Body of pancreas (tissue), 4 donors: ENCODE measurements at regions of chr12 and their contacts with region 1.

Region 1: DNA sequence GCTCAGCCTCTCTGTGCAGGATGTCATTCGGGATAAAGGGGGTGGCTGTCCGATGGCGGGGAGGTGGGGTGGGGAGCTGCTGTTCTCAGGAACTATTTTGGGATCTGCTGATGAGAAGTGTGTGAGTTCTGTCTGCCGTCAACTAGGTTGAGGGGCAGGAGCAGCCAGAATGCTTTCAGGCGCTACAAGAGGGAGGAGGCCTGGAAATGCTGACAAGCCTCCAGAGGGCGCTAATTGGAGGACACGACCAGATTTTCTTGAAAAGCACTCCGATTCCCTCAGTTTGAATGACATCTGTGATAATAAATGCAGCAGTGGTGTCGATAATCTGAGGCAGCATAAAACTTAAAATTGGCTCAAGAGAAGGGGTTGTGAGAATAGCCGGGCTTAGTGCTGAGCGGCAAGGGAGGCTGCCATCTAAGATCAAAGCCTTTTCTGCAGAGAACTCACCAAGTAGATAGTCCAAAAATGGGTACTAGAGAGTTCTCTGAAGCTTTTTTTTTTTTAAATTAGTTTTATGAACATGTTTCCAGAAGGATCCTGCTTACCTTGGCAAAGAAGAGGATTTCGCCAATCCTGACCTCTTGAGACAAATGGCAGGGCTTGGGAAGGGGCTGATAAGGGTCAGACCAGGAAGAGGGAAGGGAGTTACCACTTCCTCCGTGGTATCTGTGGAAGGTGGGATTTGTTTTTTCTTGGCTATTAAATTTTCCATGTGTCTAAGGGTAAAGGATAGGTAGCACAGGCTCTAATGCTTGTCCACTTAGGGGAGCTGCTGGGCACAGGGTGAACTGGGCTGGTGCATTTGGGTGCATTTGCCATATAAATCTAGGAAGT is 94.4 kb downstream of the CRACR2A start:
- DNase-seq: peak in 3 of 4 donors; percentile 27 to 57 (median 48)
- ATAC-seq: no peak
- H3K4me3 ChIP-seq: no peak overlapping the region
- H3K27ac ChIP-seq: no peak overlapping the region
- H3K4me1 ChIP-seq: peaks cover 3% of the 10 kb centered on the region
- H3K27me3 ChIP-seq: no peaks in the 10 kb centered on the region
- CTCF ChIP-seq: peak in 5 of 7 experiments; percentile 28 to 54 (median 42)
- POLR2A ChIP-seq: no peak

Region 2: DNA sequence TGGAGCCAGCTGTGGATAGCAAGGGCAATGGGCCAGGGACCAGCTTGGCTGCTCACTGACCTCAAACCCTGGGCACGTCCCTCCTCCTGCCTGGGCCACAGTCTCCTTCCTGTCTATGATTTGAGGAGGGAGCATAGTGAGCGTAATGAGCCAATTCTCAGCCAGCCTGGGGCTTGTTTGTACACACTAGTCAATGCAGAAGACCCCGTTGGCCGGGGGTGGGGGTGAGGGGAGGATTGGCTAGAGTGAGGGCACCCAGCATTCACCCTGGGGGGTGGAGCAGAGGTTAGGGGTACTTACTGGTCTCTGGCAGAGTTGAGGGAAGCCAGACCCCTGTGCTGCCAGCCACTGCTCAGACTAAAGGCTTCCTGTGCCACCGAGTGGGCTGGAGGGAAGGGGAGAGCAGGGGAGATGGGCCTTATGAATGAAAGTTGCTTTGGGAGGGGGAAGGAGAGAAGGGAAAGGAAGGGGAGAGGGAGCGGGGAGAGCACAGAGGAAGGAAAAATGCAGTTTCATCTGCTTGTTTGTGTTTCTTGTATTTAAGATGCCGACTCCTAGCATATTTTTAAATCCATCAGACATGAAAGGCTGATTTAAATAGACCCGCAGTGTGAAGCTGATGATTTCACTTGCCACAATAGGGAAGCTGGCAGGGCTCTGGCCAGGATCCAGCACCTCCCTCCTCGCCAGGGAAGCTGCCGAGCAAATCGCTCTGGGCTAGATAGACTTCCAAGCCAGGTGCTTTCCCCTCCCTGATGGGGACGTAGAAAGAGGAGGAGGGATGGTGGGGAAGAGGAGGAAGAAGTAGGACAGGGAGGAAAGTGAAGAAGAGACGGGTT is 53.6 kb before region 1 on chr12:
- intact Hi-C with region 1: no loop called
- DNase-seq: peak; percentile 57 to 80 (median 63)
- ATAC-seq: peak; percentile 45
- H3K4me3 ChIP-seq: no peak overlapping the region
- H3K27ac ChIP-seq: no peak overlapping the region
- H3K4me1 ChIP-seq: no peaks in the 10 kb centered on the region
- H3K27me3 ChIP-seq: no peaks in the 10 kb centered on the region
- CTCF ChIP-seq: no peak
- POLR2A ChIP-seq: no peak

Region 3: DNA sequence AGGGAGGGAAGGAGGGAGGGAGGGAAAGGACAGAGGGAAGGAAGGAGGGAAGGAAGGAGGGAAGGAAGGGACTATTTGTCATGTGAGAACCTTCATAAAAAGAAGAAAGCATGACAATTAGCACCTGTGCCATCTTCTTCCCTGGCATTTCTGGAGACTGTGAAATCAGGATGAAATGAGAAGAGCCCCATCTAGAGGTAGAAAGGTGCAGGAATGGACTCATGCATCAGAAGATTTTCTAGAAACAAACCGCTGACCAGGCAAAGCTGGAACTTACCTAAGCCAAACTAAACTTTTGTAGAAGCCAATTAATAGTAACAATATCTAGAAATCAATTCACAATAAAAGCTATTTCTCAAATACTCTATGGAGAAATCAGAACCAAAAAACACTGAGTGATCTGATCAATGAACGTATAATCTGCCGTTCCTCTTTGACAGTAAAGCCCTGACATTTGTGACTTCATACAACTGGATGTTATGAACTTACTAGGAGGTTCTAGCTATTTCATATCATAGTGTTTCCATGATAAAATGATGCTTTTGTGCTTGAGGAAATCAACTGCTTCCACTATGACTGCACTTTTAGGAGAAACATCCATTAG is 118.8 kb after region 1 on chr12:
- intact Hi-C with region 1: loop called (anchors 10 kb)
- DNase-seq: peak in 1 of 4 donors; percentile 44
- ATAC-seq: no peak
- H3K4me3 ChIP-seq: no peak overlapping the region
- H3K27ac ChIP-seq: no peak overlapping the region
- H3K4me1 ChIP-seq: no peaks in the 10 kb centered on the region
- H3K27me3 ChIP-seq: no peaks in the 10 kb centered on the region
- CTCF ChIP-seq: peak; percentile 36 to 82 (median 77)
- POLR2A ChIP-seq: no peak